ENCODE measurements at regions of chr7 and their contacts with region 1.

Region 1: DNA sequence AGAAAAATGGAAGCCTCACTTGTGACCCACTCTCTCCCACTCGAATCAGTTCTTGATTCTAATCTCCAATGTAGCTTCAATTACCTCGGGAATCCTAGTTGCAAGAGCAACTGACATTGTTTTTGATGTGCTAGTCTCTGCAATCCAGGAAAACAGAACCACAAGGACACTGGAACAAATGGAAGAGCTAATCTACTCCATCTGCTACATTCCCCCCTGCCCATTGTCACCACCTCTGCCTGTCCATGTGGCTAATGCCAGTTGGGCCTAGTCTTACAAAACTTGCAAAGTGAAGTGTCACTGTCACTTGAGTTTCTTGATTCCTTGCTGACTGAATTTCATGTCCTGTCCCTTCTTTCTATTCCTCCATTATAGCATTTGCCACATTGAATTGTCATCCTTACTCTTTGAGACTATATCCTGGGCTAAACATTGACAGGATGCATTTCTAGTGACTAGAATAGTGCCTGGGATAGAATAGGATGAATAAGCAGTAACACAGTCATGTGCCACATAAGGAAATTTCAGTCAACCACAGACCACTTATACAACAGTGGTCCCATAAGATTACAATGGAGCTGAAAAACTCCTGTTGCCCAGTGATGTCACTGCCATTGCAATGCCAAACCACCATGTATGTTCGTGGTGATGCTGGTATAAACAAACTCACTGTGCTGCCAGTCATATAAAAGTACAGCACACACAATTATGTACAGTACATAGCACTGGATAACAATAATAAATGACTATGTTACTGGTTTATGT is 13.5 kb downstream of the GCC1 start:
- DNase-seq: no peak
- CTCF ChIP-seq: no peak

Region 2: GRCh38 chr7:127536741-127537140 is 35.2 kb before region 1 on chr7:
- CTCF ChIA-PET with region 1: no interaction called
- POLR2A ChIA-PET with region 1: no interaction called
- DNase-seq: no peak
- CTCF ChIP-seq: no peak

Region 3: DNA sequence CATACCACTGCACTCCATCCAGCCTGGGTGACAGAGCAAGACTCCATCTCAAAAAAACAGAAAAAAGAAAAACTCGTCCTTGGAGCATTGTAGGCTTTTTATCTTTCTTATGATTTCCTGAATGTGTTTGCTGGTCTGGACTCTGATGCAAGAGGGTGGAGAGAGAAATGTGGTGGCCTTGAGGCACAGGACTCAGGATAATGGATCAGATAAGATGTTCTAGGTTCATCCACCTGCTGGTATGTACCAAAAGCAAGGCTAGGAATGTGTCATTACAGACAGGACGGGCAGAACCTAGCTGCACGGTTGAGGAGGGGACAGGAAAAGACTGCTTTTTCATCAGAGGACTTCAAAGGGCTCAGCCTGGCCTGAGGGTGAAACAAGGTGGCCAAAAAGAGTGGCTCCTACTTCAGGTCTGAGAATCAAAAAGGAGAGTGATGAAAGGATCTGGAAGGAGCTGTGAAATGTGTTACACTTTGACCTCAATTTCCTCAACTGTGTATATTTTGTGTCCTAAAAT is 19.9 kb before region 1 on chr7:
- CTCF ChIA-PET with region 1: no interaction called
- POLR2A ChIA-PET with region 1: no interaction called
- DNase-seq: no peak
- CTCF ChIP-seq: no peak

Region 4: GRCh38 chr7:127582361-127582760 is 10.4 kb after region 1 on chr7:
- CTCF ChIA-PET with region 1: interaction called, 10 read pairs
- POLR2A ChIA-PET with region 1: no interaction called
- DNase-seq: no peak
- CTCF ChIP-seq: no peak